ENCODE measurements at regions of chr10 and their contacts with region 1.

Region 1: DNA sequence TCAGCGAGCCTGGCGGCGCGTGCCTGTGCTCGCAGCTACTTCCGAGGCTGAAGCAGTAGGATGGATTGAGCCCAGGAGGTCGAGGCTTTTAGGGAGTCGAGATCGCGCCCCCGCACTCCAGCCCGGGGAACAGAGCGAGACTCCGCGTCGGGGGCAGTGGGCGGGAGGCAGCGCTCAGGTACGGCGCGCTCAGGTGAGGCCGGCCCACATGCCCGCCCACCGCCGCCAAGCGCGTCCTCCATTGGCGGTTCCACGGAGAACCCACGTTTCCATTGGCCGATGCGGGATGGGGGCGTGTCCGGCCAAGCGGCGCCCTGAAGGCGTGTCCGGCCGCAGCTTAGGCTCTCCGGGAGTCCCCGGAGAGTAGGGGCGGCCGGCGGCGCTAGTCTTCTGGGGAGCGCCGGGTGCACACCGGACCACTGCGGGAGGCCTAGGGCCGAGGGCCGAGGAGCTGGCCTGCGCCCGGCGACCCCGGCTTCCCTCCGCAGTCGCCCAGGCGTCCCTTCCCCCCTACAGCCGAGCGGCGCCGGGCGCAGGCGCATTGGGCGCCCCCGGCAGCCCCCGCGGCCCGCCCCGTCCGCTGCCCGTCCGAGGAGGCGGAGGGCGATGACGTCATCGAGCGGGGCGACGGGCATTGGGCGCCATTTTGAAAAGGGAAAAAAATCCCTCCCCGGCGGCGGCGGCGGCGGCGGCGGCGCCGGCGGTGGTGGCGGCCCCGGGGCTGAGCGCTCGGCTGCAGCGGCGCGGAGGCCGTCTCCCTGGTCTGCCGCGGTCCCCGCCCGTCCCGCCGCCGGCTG is at the start of gene PPP2R2D:
- DNase-seq: peak; percentile 95
- H3K4me3 Mint-ChIP-seq: peak within 1 kb of the TSS; percentile 91
- H3K27ac Mint-ChIP-seq: peak within 1 kb of the TSS; percentile 83
- H3K4me1 Mint-ChIP-seq: peaks cover 55% of the 10 kb centered on the region
- H3K27me3 Mint-ChIP-seq: peaks cover 18% of the 10 kb centered on the region
- total RNA-seq, gene PPP2R2D: 37.6 and 38.4 TPM in 2 replicates

Region 2: GRCh38 chr10:131396121-131397050 is 504.2 kb before region 1 on chr10:
- intact Hi-C with region 1: no loop called
- DNase-seq: no peak
- H3K4me3 Mint-ChIP-seq: no peak overlapping the region
- H3K27ac Mint-ChIP-seq: no peak overlapping the region
- H3K4me1 Mint-ChIP-seq: no peaks in the 10 kb centered on the region
- H3K27me3 Mint-ChIP-seq: no peaks in the 10 kb centered on the region

Region 3: DNA sequence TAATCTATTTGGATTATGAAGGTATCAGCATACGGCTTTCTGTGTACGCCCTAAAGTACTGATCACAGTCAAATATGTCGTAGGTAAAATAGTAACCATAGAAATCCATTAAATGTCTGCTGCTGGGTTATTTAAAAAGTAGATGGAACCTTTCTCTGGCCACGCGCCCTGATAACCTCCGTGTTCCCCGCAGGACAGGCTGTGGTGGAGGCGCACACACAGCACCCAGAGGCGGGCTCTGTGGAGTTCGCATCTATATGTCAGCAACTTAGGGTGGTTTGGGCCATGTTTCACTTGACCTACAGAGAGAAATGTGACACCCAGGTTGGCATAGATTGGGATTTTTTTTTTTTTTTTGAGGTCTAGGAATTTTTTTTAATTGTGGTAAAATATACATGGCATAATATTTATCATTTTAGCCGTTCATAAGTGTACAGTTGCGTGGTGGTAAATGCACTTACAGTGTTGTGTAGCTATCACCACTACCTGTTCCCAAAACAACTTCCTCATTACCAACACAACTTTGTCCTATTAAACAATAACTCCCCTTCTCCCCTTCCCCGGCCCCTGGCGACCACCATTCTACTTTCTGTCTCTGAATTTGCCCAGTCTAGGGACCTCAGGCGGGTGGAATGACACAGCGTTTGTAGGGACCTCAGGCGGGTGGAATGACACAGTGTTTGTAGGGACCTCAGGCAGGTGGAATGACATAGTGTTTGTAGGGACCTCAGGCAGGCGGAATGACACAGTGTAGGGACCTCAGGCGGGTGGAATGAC is 15.6 kb after region 1 on chr10:
- intact Hi-C with region 1: loop called (anchors 2 kb)
- DNase-seq: no peak
- H3K4me3 Mint-ChIP-seq: no peak overlapping the region
- H3K27ac Mint-ChIP-seq: peak overlapping the region; percentile 92
- H3K4me1 Mint-ChIP-seq: peaks cover 47% of the 10 kb centered on the region
- H3K27me3 Mint-ChIP-seq: no peaks in the 10 kb centered on the region

Region 4: DNA sequence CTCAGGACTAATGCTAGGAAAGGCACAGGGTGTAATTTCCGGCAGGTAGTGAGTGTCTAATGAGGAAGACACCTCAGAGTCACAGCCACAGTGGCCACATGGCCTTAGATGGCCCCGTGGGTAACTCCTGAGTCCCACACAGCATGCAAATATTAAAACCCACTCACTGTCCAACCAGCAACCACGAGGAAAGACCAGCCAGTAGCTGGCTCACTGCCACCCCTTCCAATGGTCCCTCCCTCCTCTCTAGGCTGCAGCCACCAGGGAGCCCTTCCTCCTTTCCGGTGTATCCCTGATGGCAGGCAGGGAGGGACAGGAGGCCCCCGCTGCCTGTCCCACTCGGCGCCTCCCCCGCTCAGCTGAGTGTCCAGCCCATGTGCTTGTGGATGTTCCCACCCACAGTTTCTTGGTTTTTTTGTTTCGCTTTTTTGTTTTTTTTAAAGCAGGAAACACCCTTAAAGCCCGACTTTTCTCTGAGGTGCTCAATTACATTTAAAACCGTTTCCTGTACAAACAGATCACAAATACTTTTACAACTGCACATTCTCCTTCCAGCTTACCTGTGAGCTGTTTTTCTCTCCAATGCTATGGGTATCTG is 72.0 kb after region 1 on chr10:
- intact Hi-C with region 1: loop called (anchors 2 kb)
- DNase-seq: peak; percentile 38
- H3K4me3 Mint-ChIP-seq: peak overlapping the region; percentile 71
- H3K27ac Mint-ChIP-seq: peak overlapping the region; percentile 87
- H3K4me1 Mint-ChIP-seq: peaks cover 73% of the 10 kb centered on the region
- H3K27me3 Mint-ChIP-seq: no peaks in the 10 kb centered on the region

Region 5: GRCh38 chr10:132158122-132158741 is 257.7 kb after region 1 on chr10:
- intact Hi-C with region 1: loop called (anchors 5 kb)
- DNase-seq: peak; percentile 40
- H3K4me3 Mint-ChIP-seq: no peak overlapping the region
- H3K27ac Mint-ChIP-seq: peak overlapping the region; percentile 83
- H3K4me1 Mint-ChIP-seq: peaks cover 28% of the 10 kb centered on the region
- H3K27me3 Mint-ChIP-seq: peaks cover 2% of the 10 kb centered on the region

Region 6: GRCh38 chr10:132331526-132332432 is 431.2 kb after region 1 on chr10 and contains the start of gene LRRC27:
- intact Hi-C with region 1: loop called (anchors 5 kb)
- DNase-seq: peak; percentile 100
- H3K4me3 Mint-ChIP-seq: peak within 1 kb of the TSS; percentile 91
- H3K27ac Mint-ChIP-seq: peak within 1 kb of the TSS; percentile 96
- H3K4me1 Mint-ChIP-seq: peaks cover 58% of the 10 kb centered on the region
- H3K27me3 Mint-ChIP-seq: peaks cover 3% of the 10 kb centered on the region
- total RNA-seq, gene LRRC27: 1.7 and 3.4 TPM in 2 replicates

Region 7: DNA sequence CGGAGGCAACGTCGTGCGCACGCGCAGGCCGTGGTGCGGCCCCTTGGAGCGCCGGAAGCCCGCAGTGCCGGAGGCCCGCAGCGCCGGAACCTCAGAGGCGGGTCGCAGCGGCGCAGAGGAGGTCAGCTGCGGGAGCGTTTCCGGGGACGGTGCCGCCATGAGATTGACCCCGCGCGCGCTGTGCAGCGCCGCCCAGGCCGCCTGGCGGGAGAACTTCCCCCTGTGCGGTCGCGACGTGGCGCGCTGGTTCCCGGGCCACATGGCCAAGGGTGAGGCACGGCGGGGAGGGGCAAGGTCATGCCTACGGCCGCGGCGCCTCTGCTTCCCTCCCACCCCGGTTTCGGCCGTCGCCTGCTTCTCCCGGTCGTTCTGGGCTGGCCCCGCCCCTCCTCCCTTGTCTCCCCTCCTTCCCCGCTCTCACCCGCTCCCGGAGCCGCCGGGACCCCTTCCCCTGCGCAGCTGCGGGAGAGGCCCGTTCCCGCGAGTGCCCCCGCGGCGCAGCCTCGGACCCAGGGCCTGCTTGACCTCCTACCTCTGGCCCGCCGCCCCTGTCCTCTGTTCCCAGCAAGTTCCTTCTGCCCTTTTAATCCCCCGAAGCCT is 1493.6 kb after region 1 on chr10 and contains the start of gene MTG1:
- intact Hi-C with region 1: loop called (anchors 10 kb)
- DNase-seq: peak; percentile 96
- H3K4me3 Mint-ChIP-seq: peak within 1 kb of the TSS; percentile 99
- H3K27ac Mint-ChIP-seq: peak within 1 kb of the TSS; percentile 98
- H3K4me1 Mint-ChIP-seq: peaks cover 28% of the 10 kb centered on the region
- H3K27me3 Mint-ChIP-seq: no peaks in the 10 kb centered on the region
- total RNA-seq, gene MTG1: 64.9 and 67.9 TPM in 2 replicates